ENCODE measurements at regions of chr4 and their contacts with region 1.

Region 1: GRCh38 chr4:139453371-139454110 is 380 bp upstream of the RAB33B start:
- DNase-seq: peak; percentile 97 to 98
- H3K4me3 ChIP-seq: peak overlapping the region; percentile 92
- H3K4me3 Mint-ChIP-seq: peak overlapping the region; percentile 93
- H3K27ac Mint-ChIP-seq: peak overlapping the region; percentile 98
- H3K4me1 ChIP-seq: peaks cover 37% of the 10 kb centered on the region
- H3K4me1 Mint-ChIP-seq: peaks cover 40% of the 10 kb centered on the region
- H3K27me3 ChIP-seq: no peaks in the 10 kb centered on the region
- H3K27me3 Mint-ChIP-seq: no peaks in the 10 kb centered on the region
- CTCF ChIP-seq: no peak

Region 2: DNA sequence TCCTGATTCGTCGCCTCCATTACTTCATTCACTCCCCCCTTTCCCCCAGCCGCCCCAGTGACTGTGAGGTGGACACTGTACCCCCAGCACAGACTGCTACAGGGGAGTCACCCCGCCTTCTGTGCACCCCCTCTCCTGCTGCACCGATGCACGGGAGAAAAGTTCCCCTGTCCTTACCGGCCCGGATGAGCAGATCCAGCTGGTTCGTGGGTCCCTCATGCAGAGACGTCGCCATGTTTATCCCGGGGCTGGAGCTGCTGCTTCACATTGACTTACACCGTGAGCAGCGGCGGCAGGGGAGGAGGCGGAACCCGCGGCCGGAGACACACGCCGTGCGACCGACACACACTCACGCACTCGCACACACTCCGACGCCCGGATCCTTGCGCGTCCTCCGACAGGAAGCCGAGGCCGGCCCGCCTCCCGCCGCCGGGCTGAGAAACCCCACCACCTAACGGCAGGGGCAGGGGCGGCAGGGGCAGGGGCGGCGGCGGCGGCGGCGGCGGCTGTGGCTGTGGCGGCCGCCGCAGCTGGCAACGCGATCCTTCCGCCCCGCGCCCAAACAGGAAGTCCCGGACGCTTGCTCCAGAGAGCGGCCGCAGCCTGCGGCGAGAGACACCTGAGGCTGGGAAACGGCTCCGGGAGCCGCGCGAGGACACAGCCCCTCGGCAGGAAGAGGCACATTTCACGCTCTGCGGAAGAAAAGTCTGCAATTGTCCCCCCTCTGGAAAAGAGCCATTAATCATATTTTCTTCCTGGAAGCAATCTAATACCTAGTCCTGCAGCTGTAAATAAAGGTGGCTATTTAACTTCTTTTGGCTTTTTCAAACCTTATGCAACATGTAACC is 369.4 kb before region 1 on chr4:
- CTCF ChIA-PET with region 1: no interaction called
- POLR2A ChIA-PET with region 1: no interaction called
- intact Hi-C with region 1: loop called (anchors 5 kb)
- DNase-seq: peak; percentile 91 to 93
- H3K4me3 ChIP-seq: peak overlapping the region; percentile 88
- H3K4me3 Mint-ChIP-seq: peak overlapping the region; percentile 97
- H3K27ac Mint-ChIP-seq: peak overlapping the region; percentile 98
- H3K4me1 ChIP-seq: peaks cover 14% of the 10 kb centered on the region; the same call in 1 of the 2 replicates
- H3K4me1 Mint-ChIP-seq: peaks cover 19% of the 10 kb centered on the region
- H3K27me3 ChIP-seq: no peaks in the 10 kb centered on the region
- H3K27me3 Mint-ChIP-seq: no peaks in the 10 kb centered on the region
- CTCF ChIP-seq: peak; percentile 21

Region 3: DNA sequence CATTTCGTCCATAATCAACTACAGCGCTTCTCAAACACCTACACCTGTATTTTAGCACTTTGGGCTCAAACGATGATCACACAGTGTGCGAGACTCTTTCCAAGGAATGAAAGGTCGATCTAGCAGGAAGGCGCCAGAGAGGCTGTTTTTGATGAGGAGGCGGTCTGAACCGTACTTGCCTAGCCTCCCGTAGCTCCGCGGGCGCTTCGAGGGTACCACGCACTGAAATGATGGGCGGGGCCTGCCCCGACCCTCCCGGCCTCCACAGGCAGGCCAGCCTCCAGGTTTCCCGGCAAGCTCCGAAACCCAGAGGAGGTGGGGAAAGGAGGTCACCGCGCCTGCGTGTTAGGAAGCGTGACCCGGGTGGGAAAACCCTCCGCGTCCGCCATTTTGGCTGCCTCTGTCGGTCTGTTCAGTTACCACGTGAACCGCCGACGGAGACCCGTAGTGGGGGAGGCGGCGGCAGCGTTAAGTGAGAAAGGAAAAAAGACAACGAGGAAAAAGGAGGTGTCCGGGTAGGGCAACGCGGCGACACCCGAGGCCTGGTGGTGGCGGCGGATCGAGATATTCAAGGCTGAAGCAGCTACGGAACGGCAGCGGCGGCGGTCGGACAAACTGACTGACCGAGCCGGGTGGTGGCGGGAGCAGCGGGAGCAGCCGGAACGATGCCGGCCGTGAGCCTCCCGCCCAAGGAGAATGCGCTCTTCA is 152.3 kb before region 1 on chr4 and contains the start of gene NAA15:
- CTCF ChIA-PET with region 1: no interaction called
- POLR2A ChIA-PET with region 1: no interaction called
- intact Hi-C with region 1: loop called (anchors 5 kb)
- DNase-seq: peak; percentile 98
- H3K4me3 ChIP-seq: peak within 1 kb of the TSS; percentile 99
- H3K4me3 Mint-ChIP-seq: peak within 1 kb of the TSS; percentile 96
- H3K27ac Mint-ChIP-seq: peak within 1 kb of the TSS; percentile 97
- H3K4me1 ChIP-seq: peaks cover 11% of the 10 kb centered on the region
- H3K4me1 Mint-ChIP-seq: no peaks in the 10 kb centered on the region
- H3K27me3 ChIP-seq: no peaks in the 10 kb centered on the region
- H3K27me3 Mint-ChIP-seq: no peaks in the 10 kb centered on the region
- CTCF ChIP-seq: no peak
- total RNA-seq, gene NAA15: 63.1 and 71.6 TPM in 2 replicates

Region 4: GRCh38 chr4:139509727-139510410 is 56.3 kb after region 1 on chr4:
- CTCF ChIA-PET with region 1: interaction called, 4 read pairs
- POLR2A ChIA-PET with region 1: no interaction called
- intact Hi-C with region 1: loop called (anchors 2 kb)
- DNase-seq: peak in 1 of 2 experiments; percentile 48
- H3K4me3 ChIP-seq: no peak overlapping the region
- H3K4me3 Mint-ChIP-seq: no peak overlapping the region
- H3K27ac Mint-ChIP-seq: no peak overlapping the region
- H3K4me1 ChIP-seq: no peaks in the 10 kb centered on the region
- H3K4me1 Mint-ChIP-seq: no peaks in the 10 kb centered on the region
- H3K27me3 ChIP-seq: no peaks in the 10 kb centered on the region
- H3K27me3 Mint-ChIP-seq: no peaks in the 10 kb centered on the region
- CTCF ChIP-seq: peak; percentile 23 to 85

Measured in Caco-2 (cell line).